ENCODE measurements at regions of chr11 and their contacts with region 1.

Region 1: DNA sequence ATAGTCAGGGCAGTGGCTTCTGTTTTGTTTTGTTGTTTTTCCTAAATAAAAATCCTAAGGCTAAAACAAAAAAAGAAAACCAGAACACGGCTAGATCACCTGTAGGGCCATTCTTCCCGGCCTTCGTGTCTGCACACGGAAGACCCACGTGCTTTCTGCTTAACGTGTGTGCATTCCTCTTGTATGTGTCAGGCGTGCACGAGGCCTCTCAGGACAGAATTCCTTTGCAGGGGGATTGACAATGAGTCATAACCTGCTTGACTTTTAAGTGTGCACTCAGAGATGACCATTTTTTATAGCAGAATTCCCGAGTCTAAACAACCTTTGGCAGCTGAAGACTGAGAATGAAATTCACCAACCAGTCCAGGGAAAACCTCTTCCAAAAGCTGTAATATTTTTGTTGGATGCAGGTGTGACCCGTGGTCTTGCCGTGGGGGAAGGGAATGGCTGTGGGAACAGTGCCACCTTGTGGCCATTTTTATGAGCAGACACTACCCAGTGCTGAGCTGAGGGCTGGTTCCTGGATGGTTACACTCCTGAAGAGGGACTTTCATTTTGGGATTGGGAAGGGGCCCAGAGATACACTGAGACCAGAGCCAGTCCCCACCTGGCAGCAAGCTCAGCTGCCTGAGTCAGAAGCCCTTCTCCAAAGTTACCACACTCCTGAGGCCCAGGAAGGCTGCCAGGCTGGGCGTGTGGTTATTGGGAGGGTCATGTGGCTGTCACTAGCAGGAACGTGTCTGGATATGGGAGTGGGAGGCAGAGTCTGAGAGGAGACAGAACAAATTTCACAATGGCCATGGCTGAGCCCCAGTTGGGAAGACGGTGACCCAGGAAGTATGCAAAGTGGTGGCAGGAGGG is 35.8 kb upstream of the DKK3 start:
- DNase-seq: peak; percentile 69 to 89
- H3K4me3 ChIP-seq: peak overlapping the region; percentile 16; the same call in 1 of the 2 replicates
- H3K27ac ChIP-seq: peak overlapping the region; percentile 69
- H3K4me1 ChIP-seq: peaks cover 29% of the 10 kb centered on the region
- H3K27me3 ChIP-seq: no peaks in the 10 kb centered on the region
- CTCF ChIP-seq: peak; percentile 89

Region 2: DNA sequence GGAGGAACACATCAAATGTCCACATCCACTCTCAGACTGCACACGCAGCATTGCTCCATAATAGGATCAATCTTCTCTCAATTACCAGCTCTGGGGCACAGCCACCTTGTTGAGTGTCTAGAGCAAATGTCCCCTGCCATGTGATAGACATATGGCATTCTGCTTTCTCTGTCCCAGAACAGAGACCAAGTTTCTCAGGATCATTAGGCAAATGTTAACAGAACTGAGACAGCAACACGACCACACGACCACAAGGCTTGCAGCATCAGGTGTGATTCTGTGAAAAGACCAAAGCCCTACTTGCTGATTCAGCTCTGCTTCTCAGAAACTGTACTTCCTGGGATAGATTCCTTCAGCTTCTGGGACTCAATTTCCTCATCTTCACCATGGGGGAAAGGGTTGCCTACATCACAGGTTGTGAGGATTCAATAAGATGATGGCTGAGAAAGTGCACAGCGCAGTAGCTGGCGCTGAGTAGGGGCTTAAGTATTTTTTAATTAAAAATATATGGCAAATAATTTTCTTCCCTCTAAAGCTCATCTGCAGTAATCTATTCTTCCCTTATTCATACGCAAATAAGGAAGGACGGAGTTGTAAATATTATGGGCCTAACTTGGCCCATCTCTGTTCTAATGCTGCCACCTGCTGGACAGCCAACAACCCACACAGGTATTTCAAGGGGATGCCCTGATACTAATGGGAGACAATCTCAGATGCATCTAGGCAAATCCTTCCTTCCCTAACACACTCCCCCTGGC is 256.7 kb before region 1 on chr11:
- CTCF ChIA-PET with region 1: interaction called, 9 read pairs
- POLR2A ChIA-PET with region 1: no interaction called
- intact Hi-C with region 1: loop called (anchors 1 kb)
- DNase-seq: peak; percentile 41 to 46
- H3K4me3 ChIP-seq: no peak overlapping the region
- H3K27ac ChIP-seq: no peak overlapping the region
- H3K4me1 ChIP-seq: no peaks in the 10 kb centered on the region
- H3K27me3 ChIP-seq: peaks cover 10% of the 10 kb centered on the region; the same call in 1 of the 2 replicates
- CTCF ChIP-seq: peak; percentile 79

Region 3: GRCh38 chr11:11841723-11842420 is 202.3 kb before region 1 on chr11 and contains the start of gene USP47:
- CTCF ChIA-PET with region 1: no interaction called
- POLR2A ChIA-PET with region 1: no interaction called
- intact Hi-C with region 1: loop called (anchors 2 kb)
- DNase-seq: peak; percentile 57 to 81
- H3K4me3 ChIP-seq: peak within 1 kb of the TSS; percentile 93
- H3K27ac ChIP-seq: peak within 1 kb of the TSS; percentile 76
- H3K4me1 ChIP-seq: peaks cover 40% of the 10 kb centered on the region
- H3K27me3 ChIP-seq: no peaks in the 10 kb centered on the region
- CTCF ChIP-seq: peak; percentile 56
- total RNA-seq, gene USP47: 22.4 and 24.2 TPM in 2 replicates

Region 4: DNA sequence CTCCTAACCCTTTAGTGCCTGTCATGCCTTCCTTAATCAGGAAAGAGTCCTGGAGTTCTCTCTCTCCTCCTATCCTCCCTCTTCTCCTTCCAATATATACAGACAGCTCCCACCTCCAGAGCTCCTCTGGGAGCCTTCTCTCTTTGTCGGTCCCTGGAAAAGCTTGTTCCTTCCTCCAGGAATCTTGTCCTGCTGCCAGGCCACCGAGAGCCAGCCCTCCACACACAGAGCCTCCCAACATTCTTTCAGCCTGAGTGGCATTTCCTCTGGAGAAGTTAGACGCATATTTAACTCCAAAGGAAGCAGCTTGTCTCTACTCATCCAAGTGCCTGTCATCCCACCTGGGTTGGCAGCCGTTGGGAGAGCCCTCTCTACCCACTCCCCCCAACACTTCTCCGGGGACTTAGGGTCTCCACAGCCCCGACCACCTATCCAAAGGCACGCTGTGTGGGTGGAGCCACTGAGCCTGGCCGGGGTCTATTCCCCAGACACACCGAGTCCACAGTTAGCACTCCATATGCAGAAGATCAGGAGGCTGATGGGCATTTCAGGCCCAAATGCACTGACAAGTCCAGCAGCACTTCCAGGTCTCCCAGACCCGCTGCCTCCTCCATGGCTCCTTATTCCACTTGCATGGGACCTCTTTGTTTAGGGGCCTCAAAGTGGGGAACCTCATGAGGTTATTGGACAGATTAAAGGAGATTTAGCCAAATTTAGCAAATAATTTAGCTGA is 66.8 kb before region 1 on chr11:
- CTCF ChIA-PET with region 1: interaction called, 3 read pairs
- POLR2A ChIA-PET with region 1: no interaction called
- intact Hi-C with region 1: loop called (anchors 5 kb)
- DNase-seq: peak; percentile 43 to 49
- H3K4me3 ChIP-seq: no peak overlapping the region
- H3K27ac ChIP-seq: no peak overlapping the region
- H3K4me1 ChIP-seq: peaks cover 15% of the 10 kb centered on the region
- H3K27me3 ChIP-seq: no peaks in the 10 kb centered on the region
- CTCF ChIP-seq: no peak

Region 5: DNA sequence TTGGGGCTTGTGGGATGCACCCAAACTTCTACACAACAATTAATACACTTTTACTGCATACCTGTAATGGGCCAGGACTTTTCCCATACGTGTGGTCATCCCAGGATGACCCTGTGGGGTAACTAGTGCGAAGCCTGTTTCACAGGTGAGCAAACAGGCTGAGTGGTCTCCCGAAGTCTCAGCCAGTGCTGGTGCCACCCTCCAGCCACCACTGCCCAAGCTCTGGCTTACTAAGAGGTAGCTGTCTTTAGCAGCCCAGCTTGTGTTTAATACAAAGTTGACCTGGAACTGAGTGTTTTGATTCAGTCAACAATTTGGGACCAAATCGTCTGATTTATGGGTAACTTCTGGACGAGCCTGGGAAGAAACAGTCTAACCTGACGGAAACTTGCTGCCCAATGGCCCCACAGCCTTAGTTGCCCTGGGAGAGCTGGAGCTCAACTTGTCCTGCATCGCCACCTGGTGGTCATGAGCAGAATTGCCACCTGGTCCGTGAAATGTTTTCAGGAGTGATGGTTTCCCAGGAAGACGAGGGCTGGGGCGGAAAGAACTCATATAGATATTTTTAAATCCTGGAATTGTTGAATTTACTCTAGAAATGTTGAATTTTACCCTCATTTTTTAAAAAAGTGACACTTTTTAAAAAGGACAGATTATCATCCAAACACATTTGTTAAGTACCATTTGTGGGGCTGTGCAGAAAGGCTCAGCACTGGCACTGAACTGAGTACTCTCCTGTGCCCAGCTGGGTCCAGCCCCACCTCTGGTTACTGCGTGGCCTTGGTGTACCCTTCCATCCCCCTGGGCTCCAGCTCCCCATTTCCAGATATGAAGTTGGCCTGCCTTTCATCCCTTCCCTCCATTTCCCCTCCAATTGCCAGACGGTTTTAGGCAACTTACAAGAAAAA is 237.6 kb after region 1 on chr11:
- CTCF ChIA-PET with region 1: interaction called, 9 read pairs
- POLR2A ChIA-PET with region 1: no interaction called
- intact Hi-C with region 1: loop called (anchors 1 kb)
- DNase-seq: peak in 1 of 2 experiments; percentile 68
- H3K4me3 ChIP-seq: no peak overlapping the region
- H3K27ac ChIP-seq: no peak overlapping the region
- H3K4me1 ChIP-seq: peaks cover 34% of the 10 kb centered on the region
- H3K27me3 ChIP-seq: no peaks in the 10 kb centered on the region
- CTCF ChIP-seq: peak; percentile 94

Measured in PC-9 (cell line).